Body of pancreas (tissue), 4 donors: ENCODE measurements at regions of chr7 and their contacts with region 1.

Region 1: DNA sequence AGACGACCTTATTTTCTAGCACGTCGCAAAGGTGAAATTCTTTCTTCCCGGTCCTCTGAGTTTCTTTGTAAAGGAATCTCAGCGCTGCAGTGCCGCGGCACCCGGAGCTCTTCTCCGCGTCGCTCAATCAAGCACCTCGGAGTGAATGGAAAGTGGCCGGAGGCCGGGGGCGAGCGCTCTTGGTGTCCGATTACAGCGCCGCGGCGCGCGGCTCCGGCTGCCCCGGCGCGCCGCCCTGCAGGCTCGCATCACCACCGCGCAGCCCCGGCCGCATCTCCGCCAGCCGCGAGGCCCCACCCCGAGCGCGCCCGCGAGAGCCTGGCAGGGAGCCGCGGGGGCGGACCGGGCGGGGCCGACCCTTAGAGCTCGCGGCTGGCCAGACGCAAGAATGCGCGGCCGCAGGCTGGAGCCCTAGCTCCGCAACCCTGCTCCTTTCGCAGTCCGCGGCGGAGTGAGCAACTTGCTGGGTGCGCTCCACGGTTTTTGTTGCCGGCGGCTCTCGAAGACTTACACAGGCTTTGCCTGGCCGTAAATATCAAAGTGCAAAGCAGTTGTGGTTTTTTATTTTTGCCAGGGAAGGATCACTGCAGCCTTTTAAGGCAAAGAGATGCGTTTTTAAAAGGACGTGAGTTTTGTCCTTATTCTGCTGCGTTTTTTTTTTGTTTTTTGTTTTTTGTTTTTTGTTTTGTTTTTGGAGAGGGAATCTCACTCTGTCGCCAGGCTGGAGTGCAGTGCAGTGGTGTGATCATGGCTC is at the start of gene SEMA3C:
- DNase-seq: peak; percentile 84 to 92 (median 86)
- ATAC-seq: peak; percentile 97
- H3K4me3 ChIP-seq: peak within 1 kb of the TSS in 1 of 2 donors; percentile 6
- H3K27ac ChIP-seq: peak within 1 kb of the TSS in 3 of 4 donors; percentile 32 to 71 (median 52)
- H3K4me1 ChIP-seq: peaks cover 16% of the 10 kb centered on the region
- H3K27me3 ChIP-seq: no peaks in the 10 kb centered on the region
- CTCF ChIP-seq: peak in 2 of 7 experiments; percentile 8 to 31
- POLR2A ChIP-seq: peak; percentile 17 to 67 (median 64)
- total RNA-seq, gene SEMA3C: 3.0 to 3.4 TPM

Region 2: DNA sequence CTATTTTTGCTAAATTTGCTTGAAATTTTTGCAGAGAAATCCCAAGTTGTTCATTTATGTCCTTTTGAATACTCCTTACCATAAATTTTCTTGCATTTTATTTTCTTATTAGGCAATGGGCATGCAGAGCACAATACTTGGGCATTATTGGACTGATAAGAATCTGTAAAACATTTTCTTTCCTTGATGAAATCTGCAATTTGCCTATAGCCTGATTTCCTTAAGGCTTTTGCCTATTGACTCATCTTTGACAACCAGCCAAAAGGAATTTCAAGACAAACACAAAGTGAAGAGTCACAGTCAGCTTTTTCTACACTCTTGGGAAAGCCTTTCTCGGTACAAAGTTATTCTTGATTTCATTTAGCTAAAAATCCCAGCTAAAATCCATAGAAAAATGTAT is 376.7 kb before region 1 on chr7:
- intact Hi-C with region 1: no loop called
- DNase-seq: no peak
- ATAC-seq: no peak
- H3K4me3 ChIP-seq: no peak overlapping the region
- H3K27ac ChIP-seq: no peak overlapping the region
- H3K4me1 ChIP-seq: no peaks in the 10 kb centered on the region
- H3K27me3 ChIP-seq: no peaks in the 10 kb centered on the region
- CTCF ChIP-seq: no peak
- POLR2A ChIP-seq: no peak

Region 3: GRCh38 chr7:80833289-80834268 is 85.5 kb before region 1 on chr7:
- intact Hi-C with region 1: no loop called
- DNase-seq: no peak
- ATAC-seq: no peak
- H3K4me3 ChIP-seq: no peak overlapping the region
- H3K27ac ChIP-seq: no peak overlapping the region
- H3K4me1 ChIP-seq: no peaks in the 10 kb centered on the region
- H3K27me3 ChIP-seq: no peaks in the 10 kb centered on the region
- CTCF ChIP-seq: no peak
- POLR2A ChIP-seq: no peak

Region 4: GRCh38 chr7:81457852-81458522 is 538.9 kb after region 1 on chr7:
- intact Hi-C with region 1: loop called (anchors 10 kb)
- DNase-seq: no peak
- ATAC-seq: no peak
- H3K4me3 ChIP-seq: no peak overlapping the region
- H3K27ac ChIP-seq: no peak overlapping the region
- H3K4me1 ChIP-seq: no peaks in the 10 kb centered on the region
- H3K27me3 ChIP-seq: no peaks in the 10 kb centered on the region
- CTCF ChIP-seq: peak in 5 of 7 experiments; percentile 12 to 32 (median 22)
- POLR2A ChIP-seq: no peak